Endothelial cell of umbilical vein (primary cell): ENCODE measurements at regions of chr9 and their contacts with region 1.

Region 1: GRCh38 chr9:35481347-35481975 is 8.4 kb upstream of the RUSC2 start:
- DNase-seq: peak; percentile 71
- H3K4me3 ChIP-seq: no peak overlapping the region
- H3K27ac ChIP-seq: no peak overlapping the region
- H3K4me1 ChIP-seq: peaks cover 5% of the 10 kb centered on the region
- H3K27me3 ChIP-seq: no peaks in the 10 kb centered on the region
- CTCF ChIP-seq: peak; percentile 75 to 80
- POLR2A ChIP-seq: no peak

Region 2: GRCh38 chr9:35071814-35072460 is 409.5 kb before region 1 on chr9:
- CTCF ChIA-PET with region 1: interaction called, 7 read pairs
- POLR2A ChIA-PET with region 1: no interaction called
- dilution Hi-C with region 1: no loop called
- intact Hi-C with region 1: loop called (anchors 1 kb)
- DNase-seq: peak; percentile 85
- H3K4me3 ChIP-seq: peak overlapping the region; percentile 79 to 97 (median 96)
- H3K27ac ChIP-seq: peak overlapping the region; percentile 95
- H3K4me1 ChIP-seq: peaks cover 29% of the 10 kb centered on the region
- H3K27me3 ChIP-seq: no peaks in the 10 kb centered on the region
- CTCF ChIP-seq: peak; percentile 25 to 65
- POLR2A ChIP-seq: peak; percentile 51

Region 3: GRCh38 chr9:35258676-35259474 is 222.6 kb before region 1 on chr9:
- CTCF ChIA-PET with region 1: interaction called, 20 read pairs
- POLR2A ChIA-PET with region 1: no interaction called
- dilution Hi-C with region 1: no loop called
- intact Hi-C with region 1: loop called (anchors 1 kb)
- DNase-seq: peak; percentile 82
- H3K4me3 ChIP-seq: no peak overlapping the region
- H3K27ac ChIP-seq: no peak overlapping the region
- H3K4me1 ChIP-seq: no peaks in the 10 kb centered on the region
- H3K27me3 ChIP-seq: no peaks in the 10 kb centered on the region
- CTCF ChIP-seq: peak; percentile 55 to 67
- POLR2A ChIP-seq: no peak

Region 4: DNA sequence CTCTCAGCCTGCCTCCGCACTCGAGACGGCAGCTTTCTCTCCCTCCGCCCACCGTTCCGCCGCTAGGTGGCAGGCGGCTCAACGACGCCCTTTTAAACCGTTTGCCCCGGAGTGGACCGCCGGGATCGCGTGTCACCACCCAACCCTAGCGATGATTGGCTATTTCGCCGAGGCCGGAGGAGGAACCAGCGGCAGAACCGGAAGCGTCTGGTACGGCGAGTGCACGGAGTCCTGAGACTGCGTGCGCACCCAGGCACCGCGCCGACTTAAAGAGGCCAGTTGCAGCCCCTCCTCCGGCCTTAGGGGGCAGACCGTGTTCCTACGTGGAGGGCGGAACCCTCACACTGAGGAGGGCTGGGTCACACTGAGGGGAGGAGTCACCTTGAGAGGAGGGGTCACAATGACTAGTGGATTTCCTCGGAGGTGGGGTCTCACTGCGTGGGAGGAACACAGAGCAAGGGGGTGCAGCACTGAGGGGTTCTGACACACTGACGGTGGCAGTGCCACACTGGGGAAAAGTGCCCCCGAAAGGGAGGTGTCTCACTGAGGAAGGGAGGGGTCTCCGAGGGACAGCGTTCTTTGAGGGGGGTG is 122.6 kb after region 1 on chr9:
- CTCF ChIA-PET with region 1: interaction called, 4 read pairs
- POLR2A ChIA-PET with region 1: no interaction called
- dilution Hi-C with region 1: no loop called
- intact Hi-C with region 1: loop called (anchors 5 kb)
- DNase-seq: peak; percentile 100
- H3K4me3 ChIP-seq: peak overlapping the region; percentile 0 to 41 (median 27)
- H3K27ac ChIP-seq: no peak overlapping the region
- H3K4me1 ChIP-seq: peaks cover 16% of the 10 kb centered on the region
- H3K27me3 ChIP-seq: peaks cover 0 to 2% of the 10 kb centered on the region in 2 experiments
- CTCF ChIP-seq: peak; percentile 88 to 99
- POLR2A ChIP-seq: no peak

Region 5: DNA sequence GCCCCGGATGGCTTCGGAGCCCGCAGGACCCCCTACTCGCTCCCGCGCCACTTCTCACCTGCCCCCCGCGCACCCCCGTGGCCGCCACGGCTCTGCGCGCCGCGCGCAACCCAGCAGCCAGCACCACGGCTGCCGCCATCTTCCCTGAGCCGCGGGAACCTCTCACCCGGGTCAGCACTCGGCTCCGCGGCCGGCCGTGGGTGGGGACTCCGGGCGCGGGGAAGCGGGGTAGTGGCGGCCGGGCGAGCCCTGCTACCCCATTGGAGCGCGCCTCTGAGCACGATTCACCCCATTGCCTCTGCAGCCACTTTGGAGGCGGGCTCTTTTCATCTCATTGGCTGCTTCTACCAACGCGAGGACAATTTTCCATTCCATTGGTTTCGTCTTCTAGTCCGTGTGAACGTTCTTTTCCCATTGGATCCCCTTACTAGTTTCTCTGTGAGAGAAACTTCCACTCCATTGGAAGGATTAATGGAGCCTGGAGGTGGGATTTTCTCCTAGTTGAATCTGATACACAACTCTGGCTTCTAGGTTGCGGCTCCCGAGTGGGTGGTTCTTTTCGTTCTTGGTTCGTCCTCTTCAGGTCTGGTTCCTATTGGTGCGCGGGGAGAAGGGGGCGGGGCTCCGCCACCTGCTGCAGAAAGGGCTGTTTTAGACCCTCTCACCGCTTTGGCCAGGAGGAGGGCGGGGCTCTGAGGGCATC is 333.5 kb after region 1 on chr9 and contains the start of gene HINT2:
- CTCF ChIA-PET with region 1: no interaction called
- POLR2A ChIA-PET with region 1: no interaction called
- dilution Hi-C with region 1: no loop called
- intact Hi-C with region 1: no loop called
- DNase-seq: peak; percentile 99
- H3K4me3 ChIP-seq: peak within 1 kb of the TSS; percentile 83 to 89 (median 85)
- H3K27ac ChIP-seq: peak within 1 kb of the TSS; percentile 44
- H3K4me1 ChIP-seq: peaks cover 21% of the 10 kb centered on the region
- H3K27me3 ChIP-seq: no peaks in the 10 kb centered on the region
- CTCF ChIP-seq: no peak
- POLR2A ChIP-seq: peak; percentile 93
- total RNA-seq, gene HINT2: 27.2 and 37.4 TPM in 2 replicates